HEK293T (cell line): ENCODE measurements at regions of chr3 and their contacts with region 1.

Region 1: DNA sequence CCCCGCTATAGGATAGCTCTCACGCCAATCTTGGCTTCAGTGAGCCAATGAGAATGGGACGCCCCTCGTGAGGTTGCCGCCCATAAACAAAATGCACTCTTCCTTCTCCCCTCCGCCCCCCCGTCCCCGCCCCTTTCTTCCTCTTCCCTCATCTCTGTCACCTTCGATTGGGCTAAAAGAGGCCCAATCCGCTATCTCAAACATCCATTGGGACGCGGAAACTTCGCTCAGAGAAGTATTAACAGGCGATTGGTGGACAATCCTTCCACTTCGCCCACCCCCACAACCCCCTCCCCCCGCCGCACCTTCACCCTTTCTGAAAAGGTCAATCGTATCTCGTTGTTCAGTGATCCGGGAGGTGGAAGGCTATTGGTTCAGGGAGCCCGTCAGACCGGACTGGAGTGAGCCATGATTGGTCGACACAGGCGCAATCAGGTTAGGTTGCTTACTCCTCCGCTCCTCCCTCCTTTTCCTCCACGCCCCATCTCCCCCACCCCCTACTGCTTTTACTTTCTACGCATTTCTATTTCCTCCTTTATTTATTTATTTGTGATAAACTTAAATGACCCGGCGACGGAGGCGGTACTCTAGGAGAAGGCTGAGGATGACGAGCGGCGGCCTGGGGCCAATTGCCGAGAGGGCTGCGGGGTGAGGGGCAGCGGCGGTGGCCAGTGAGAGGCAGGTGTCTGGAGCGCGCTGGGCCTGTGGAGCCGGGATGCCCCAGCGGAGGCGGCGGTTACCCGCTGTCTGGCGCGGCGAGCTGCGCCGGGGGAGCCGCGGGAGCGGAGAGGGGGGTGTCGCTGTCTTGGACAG is 447 bp upstream of the ZBTB20 start:
- DNase-seq: peak; percentile 84

Region 2: DNA sequence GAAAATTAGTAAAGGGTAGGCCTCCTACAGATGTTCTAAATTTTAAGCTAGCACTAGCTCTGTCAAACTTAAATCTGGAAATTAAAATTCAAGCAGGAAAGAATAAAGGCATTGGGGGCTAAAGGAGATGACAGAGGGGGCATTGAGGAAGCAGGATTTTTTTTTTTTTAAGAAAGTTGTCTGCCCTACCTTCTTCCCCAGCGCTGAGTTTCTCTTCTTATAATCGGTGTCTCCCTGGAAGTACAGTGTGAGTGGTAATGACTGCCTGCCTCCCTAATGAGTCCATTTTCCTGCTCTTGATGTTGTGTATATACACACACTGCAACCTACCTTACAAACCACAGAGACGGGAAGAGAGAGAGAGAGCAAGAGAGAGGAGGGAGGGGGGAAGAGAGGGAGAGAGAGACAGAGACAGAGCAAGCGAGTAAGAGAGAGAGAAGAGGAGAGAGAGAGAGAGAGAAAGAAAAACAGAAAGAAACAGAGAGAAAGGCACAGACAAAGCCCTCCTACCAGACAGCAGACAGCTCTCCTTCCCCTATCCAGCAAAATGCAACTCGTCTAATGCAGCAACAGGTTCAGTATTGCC is 47.5 kb before region 1 on chr3:
- CTCF ChIA-PET with region 1: no interaction called
- POLR2A ChIA-PET with region 1: interaction called, 33 read pairs
- DNase-seq: peak; percentile 6